ENCODE measurements at regions of chr2 and their contacts with region 1.

Region 1: DNA sequence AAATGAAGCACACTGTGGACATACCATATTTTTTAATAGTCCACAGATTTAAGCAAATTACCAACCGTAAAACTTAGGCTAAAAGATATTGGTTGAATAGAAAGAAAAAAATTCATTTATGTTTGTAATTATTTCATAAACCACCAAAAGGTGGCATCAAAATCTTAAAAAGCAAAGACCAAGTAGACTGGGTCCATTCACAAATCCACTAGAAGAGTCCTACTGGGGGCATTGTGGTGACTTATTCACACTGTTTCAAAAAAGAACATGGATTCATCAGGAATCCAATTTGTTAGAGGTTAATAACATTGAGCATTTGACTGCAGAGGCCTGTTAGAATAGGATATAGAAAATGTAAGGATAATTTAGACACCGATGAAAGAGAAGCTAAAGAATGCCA is 194.9 kb upstream of the KYNU start:
- DNase-seq: no peak
- ATAC-seq: no peak
- H3K4me3 ChIP-seq: no peak overlapping the region
- H3K27ac ChIP-seq: no peak overlapping the region
- H3K4me1 ChIP-seq: no peaks in the 10 kb centered on the region
- H3K27me3 ChIP-seq: no peaks in the 10 kb centered on the region
- CTCF ChIP-seq: peak in 1 of 2 donors; percentile 9

Region 2: GRCh38 chr2:142989273-142990204 is 307.0 kb after region 1 on chr2:
- intact Hi-C with region 1: loop called in 1 of 2 experiments (anchors 10 kb)
- DNase-seq: peak in 2 of 4 donors; percentile 71 to 85
- ATAC-seq: peak; percentile 70
- H3K4me3 ChIP-seq: no peak overlapping the region
- H3K27ac ChIP-seq: no peak overlapping the region
- H3K4me1 ChIP-seq: peaks cover 0 to 5% of the 10 kb centered on the region in 2 donors
- H3K27me3 ChIP-seq: no peaks in the 10 kb centered on the region
- CTCF ChIP-seq: peak in 1 of 2 donors; percentile 52

Measured in left lung (tissue), 14 donors.